Naive thymus-derived CD8-positive, alpha-beta T cell (primary cell): ENCODE measurements at regions of chr3 and their contacts with region 1.

Region 1: DNA sequence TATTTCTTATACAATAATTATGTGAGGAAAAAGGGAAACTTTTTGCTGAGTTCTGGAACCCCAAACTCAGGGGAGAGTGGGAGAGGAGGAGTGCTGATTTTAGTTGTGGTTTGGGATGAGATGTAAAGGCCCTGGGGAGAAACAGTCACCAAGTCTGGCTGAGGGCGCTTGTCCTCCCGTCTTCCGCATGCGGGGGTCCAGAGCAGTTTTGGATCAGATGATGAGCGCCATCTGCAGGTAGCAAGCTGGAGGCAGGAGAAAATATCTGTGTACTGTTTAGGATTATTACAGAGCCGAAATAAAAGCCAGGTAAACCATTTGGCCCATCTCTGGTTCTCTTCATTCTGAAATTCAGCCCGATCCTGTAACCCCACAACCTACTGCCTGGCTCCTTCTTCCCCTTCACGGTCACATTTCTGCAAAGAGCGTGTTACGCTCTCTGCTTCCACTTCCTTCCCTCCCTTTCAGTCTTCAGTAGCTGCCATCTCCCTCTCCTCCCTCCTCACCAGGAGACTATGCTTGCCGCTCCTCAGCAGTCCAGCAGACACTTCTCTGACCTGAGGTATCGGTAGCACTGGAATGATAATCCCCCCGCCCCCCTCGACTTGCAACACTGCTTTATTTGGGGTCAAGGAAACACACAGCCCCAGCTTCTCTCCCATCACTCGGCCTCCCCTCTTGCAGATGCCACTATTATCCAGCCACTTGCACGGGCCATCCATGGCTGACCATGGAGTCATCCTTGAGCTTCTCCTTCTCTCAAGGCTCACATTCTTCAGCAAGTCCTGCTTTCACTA is 1.4 kb upstream of the PARP14 start:
- DNase-seq: peak; percentile 65 to 92 (median 81)
- ATAC-seq: peak; percentile 66 to 73
- H3K4me3 Mint-ChIP-seq: peak overlapping the region; percentile 89 to 98 (median 96)
- H3K27ac Mint-ChIP-seq: peak overlapping the region; percentile 96 to 100 (median 98)
- H3K4me1 Mint-ChIP-seq: peaks cover 28 to 62% (median 57%) of the 10 kb centered on the region in 4 donors
- H3K27me3 Mint-ChIP-seq: no peaks in the 10 kb centered on the region

Region 2: GRCh38 chr3:122468896-122469533 is 210.3 kb before region 1 on chr3:
- POLR2A ChIA-PET with region 1: no interaction called
- DNase-seq: no peak
- ATAC-seq: no peak
- H3K4me3 Mint-ChIP-seq: peak overlapping the region in 5 of 10 donors; percentile 62 to 79 (median 74)
- H3K27ac Mint-ChIP-seq: peak overlapping the region in 4 of 10 donors; percentile 28 to 84 (median 42)
- H3K4me1 Mint-ChIP-seq: peaks cover 40 to 66% (median 59%) of the 10 kb centered on the region in 4 donors
- H3K27me3 Mint-ChIP-seq: no peaks in the 10 kb centered on the region

Region 3: DNA sequence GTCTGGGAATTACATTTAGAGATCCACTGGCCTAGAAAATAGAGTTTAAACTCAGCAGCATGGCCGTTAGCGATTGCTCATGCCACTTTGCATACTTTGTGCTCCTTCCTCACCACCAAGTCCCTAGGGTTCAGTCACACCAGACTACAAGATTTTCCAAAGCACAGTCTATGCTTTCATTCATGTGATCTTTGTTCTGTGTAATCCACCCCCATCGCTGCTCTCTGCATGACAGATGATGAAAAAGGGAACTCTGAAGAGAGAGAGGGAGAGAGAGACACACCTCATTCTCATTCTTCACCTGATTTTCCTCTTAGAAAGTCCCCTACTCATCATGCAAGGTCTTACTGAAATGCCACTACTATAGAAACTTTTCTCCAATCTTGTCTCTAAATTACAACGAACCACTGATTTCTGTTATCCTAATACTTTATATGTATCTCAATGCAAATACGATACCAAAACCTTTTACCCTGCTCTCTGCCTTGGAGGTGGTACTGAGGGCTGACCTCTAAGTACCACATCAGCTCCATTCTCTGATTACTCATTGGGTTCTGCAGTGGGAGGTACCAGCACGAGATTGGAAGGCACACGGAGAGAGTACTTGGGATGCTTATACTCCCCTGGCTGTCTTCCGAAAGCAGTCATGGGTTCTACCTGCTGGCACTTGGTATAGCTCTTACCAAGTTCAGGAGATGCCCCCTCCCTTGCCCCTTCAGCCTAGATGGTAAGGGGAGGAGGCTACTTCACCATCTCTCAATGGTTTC is 102.9 kb before region 1 on chr3:
- POLR2A ChIA-PET with region 1: interaction called, 13 read pairs
- DNase-seq: peak in 1 of 10 donors; percentile 19
- ATAC-seq: peak in 1 of 2 donors; percentile 34
- H3K4me3 Mint-ChIP-seq: peak overlapping the region in 8 of 10 donors; percentile 16 to 100 (median 99)
- H3K27ac Mint-ChIP-seq: peak overlapping the region in 8 of 10 donors; percentile 5 to 100 (median 96)
- H3K4me1 Mint-ChIP-seq: peaks cover 17 to 77% (median 44%) of the 10 kb centered on the region in 4 donors
- H3K27me3 Mint-ChIP-seq: no peaks in the 10 kb centered on the region

Region 4: DNA sequence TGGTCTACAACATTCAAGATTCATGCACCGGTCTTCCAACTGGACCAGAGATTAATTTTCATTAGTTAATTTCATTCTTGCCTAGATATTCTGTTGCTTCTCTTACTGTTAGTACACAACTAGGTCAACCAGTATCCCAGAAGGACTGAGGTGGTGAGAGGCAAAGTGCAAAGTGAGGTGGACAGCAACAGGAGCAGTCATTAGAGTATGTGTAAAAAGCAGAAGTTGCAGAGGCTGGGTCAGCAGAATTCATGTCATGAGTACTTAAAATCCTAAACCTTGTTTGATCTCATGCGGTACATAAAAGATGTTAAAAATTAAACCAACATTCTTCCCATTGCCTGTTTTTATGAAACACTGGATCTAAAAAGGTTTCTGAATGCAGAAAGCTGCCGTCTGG is 48.0 kb after region 1 on chr3:
- POLR2A ChIA-PET with region 1: no interaction called
- DNase-seq: no peak
- ATAC-seq: no peak
- H3K4me3 Mint-ChIP-seq: no peak overlapping the region
- H3K27ac Mint-ChIP-seq: no peak overlapping the region
- H3K4me1 Mint-ChIP-seq: peaks cover 0 to 2% (median under 1%) of the 10 kb centered on the region in 4 donors
- H3K27me3 Mint-ChIP-seq: no peaks in the 10 kb centered on the region